Heart left ventricle (tissue), 16 donors: ENCODE measurements at regions of chr6 and their contacts with region 1.

Region 1: DNA sequence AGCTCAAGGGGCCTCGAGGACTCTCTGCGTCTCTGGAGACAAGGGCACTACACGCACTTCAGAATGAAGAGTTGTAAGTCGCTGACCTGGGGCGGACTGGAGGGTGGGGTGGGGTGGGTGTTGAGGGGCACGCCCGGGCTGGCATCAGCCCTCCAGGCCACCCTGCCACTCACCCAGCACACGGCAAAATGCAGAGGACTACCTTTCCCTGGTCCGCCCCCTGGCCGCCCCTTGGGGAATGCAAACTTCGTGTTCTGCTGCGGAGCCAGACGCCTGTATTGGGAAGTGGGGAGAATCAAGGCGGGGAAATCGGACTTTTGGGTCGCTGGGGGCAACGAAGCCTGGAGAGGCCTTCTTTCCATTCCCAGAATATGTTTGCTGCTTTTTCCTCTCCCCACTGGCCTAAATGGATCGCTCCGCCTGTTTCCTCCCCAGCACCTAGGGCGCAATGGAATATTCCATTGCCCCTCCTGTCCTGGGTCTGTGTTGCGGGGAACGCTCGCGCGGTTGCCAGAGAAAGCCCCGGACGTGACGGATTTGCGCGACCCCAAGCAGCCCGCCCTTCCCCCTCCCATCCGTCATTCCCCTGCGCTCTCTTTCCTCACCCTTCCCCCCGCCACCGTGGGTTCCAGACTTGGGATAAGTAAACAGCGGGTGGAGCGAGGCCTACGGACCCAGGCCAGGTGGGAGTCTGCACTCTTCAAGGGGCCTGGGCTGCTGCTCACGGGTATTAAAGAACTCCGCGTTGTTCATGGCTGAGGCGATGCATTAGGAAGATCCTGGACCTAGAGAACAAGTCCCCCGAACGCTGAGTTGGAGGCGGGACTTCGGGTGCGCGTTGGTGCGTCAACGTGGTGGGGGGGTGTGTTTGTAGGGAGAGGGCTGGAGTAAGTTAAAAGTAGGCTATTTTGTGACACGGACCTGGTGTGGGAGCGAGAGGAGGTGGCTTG is at the start of gene PPT2:
- DNase-seq: peak; percentile 92 to 96 (median 94)
- ATAC-seq: peak; percentile 89 to 94 (median 92)
- H3K4me3 ChIP-seq: peak within 1 kb of the TSS; percentile 47 to 91 (median 78)
- H3K27ac ChIP-seq: peak within 1 kb of the TSS; percentile 66 to 96 (median 91)
- H3K4me1 ChIP-seq: peaks cover 6 to 41% (median 21%) of the 10 kb centered on the region in 12 donors
- H3K27me3 ChIP-seq: peaks cover 0 to 37% (median 4%) of the 10 kb centered on the region in 9 donors
- CTCF ChIP-seq: peak in 5 of 12 donors; percentile 3 to 46 (median 18)
- POLR2A ChIP-seq: no peak
- total RNA-seq, gene PPT2: 17.1 to 34.0 (median 22.7) TPM

Region 2: GRCh38 chr6:31267651-31268368 is 886.0 kb before region 1 on chr6:
- intact Hi-C with region 1: no loop called
- DNase-seq: no peak
- ATAC-seq: no peak
- H3K4me3 ChIP-seq: no peak overlapping the region
- H3K27ac ChIP-seq: no peak overlapping the region
- H3K4me1 ChIP-seq: peaks cover 0 to 24% (median 2%) of the 10 kb centered on the region in 12 donors
- H3K27me3 ChIP-seq: no peaks in the 10 kb centered on the region
- CTCF ChIP-seq: no peak
- POLR2A ChIP-seq: no peak

Region 3: DNA sequence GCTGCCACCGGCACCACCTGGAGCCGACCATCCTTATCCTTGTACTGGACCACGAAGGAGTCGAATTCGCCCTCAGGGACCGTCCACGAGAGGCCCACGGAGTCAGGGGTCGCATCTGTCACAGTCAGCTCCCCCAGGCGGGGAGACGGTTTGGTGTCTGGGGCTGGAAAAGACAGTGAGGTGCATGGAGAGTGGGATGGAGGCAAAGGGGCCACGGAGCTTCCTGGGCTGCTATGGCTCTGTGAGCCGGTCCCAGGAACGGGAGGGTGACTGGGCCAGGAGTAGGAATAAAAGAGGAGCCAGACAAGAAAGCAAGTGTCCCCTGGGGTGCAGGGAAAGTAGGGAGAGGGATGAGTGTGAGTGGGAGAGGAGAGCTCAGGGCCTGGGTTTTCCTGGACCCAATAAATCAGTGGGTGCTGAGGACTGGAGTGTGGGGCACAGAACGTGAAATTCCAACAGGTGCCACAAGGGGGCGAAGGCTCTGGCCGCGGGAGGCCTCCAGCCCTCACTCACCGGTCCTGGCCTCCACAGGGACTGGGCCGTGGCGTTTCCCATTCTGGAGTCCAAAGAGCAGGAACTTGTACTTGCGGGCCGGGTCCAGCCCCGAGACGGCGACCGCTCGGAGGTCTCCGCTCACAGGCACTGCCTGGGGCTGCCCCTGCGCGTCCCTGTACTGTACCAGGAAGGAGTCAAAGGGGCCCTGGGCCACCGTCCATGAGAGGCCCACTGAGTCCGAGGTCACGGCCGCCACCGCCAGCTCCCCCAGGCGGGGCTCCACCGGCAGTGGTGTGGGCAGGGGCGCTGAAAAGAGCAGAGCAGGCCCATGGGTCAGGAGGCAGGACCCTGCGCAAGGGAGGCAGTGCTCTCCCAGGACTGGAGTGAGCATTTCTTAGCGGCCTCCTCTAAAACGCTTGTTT is 105.7 kb before region 1 on chr6:
- intact Hi-C with region 1: loop called in 1 of 10 experiments (anchors 10 kb)
- DNase-seq: peak; percentile 64 to 85 (median 75)
- ATAC-seq: peak; percentile 23 to 63 (median 55)
- H3K4me3 ChIP-seq: peak overlapping the region in 1 of 12 donors; percentile 5
- H3K27ac ChIP-seq: peak overlapping the region in 11 of 12 donors; percentile 3 to 88 (median 74)
- H3K4me1 ChIP-seq: peaks cover 0 to 34% (median 24%) of the 10 kb centered on the region in 12 donors
- H3K27me3 ChIP-seq: no peaks in the 10 kb centered on the region
- CTCF ChIP-seq: peak; percentile 76 to 93 (median 80)
- POLR2A ChIP-seq: no peak

Region 4: DNA sequence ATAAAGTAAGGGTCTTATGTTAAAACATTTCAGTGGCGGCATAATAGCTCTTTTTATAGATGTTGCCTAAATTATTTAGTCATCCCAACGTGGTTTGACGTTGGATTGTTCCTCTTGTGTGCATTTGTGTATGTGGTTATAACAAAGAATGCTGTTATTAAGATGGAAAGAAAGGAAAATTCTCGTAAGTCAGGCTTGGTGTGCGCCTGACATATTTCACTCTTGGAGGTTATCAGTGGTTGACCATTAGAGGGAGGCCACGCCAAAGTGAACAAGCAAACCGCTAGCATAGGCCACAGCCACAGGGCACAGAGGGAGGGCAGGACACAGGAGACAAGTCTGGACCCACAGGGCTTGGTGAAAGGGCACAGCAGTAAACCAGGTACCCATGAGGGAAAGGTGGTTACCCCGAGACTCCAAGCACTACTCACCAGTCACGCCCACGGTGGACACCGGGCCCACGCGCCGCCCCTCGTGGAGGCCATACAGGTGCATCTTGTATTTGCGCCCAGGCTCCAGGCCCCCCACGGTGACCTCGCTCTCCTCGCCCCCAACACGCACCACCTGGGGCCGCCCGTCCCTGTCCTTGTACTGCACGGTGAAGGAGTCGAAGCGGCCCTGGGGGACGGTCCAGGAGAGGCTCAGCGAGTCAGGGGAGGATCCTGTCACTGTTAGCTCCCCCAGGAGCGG is 92.7 kb before region 1 on chr6:
- intact Hi-C with region 1: no loop called
- DNase-seq: no peak
- ATAC-seq: no peak
- H3K4me3 ChIP-seq: no peak overlapping the region
- H3K27ac ChIP-seq: no peak overlapping the region
- H3K4me1 ChIP-seq: peaks cover 0 to 5% (median 0%) of the 10 kb centered on the region in 12 donors
- H3K27me3 ChIP-seq: no peaks in the 10 kb centered on the region
- CTCF ChIP-seq: no peak
- POLR2A ChIP-seq: no peak

Region 5: GRCh38 chr6:32118782-32119628 is 34.8 kb before region 1 on chr6:
- intact Hi-C with region 1: loop called in 6 of 10 experiments (anchors 1 to 5 kb)
- DNase-seq: peak; percentile 86 to 92 (median 87)
- ATAC-seq: peak; percentile 76 to 81 (median 80)
- H3K4me3 ChIP-seq: peak overlapping the region in 1 of 12 donors; percentile 16
- H3K27ac ChIP-seq: peak overlapping the region in 9 of 12 donors; percentile 7 to 66 (median 50)
- H3K4me1 ChIP-seq: peaks cover 0 to 27% (median 19%) of the 10 kb centered on the region in 12 donors
- H3K27me3 ChIP-seq: no peaks in the 10 kb centered on the region
- CTCF ChIP-seq: peak; percentile 90 to 99 (median 94)
- POLR2A ChIP-seq: no peak

Region 6: DNA sequence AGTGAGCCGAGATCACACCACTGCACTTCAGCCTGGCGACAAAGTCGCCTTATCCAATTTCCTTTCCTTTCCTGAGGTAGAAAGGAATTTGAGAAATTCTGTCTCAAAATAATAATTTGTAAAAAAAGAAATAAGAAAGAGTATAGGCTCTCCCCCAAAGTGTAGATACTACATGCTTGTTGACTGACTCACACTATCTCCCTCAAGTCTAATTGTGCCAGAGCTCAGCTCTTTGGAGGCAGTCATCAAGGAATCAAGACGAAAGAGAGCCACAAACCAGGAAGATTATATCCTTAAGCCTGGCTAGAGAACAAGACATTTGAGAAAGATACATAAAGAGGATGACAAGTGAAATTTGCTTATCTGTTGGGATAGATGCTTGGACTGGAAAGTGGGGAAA is 20.1 kb before region 1 on chr6:
- intact Hi-C with region 1: loop called in 3 of 10 experiments (anchors 1 to 2 kb)
- DNase-seq: no peak
- ATAC-seq: no peak
- H3K4me3 ChIP-seq: no peak overlapping the region
- H3K27ac ChIP-seq: no peak overlapping the region
- H3K4me1 ChIP-seq: peaks cover 6 to 16% (median 9%) of the 10 kb centered on the region in 12 donors
- H3K27me3 ChIP-seq: no peaks in the 10 kb centered on the region
- CTCF ChIP-seq: no peak
- POLR2A ChIP-seq: no peak

Region 7: DNA sequence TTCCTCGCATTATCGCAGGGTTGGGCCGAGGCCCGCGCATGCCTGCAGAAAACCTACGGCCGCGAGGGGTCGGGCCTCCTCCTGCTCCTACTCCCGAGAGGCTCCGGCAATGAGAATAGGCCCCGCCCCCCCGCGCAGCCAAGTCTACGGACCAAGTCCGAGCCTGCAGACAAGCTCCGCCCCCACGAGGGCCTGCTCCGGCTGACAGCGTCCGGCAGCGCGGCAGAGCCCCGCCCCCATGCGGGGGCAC is 41.7 kb after region 1 on chr6:
- intact Hi-C with region 1: loop called in 1 of 10 experiments (anchors 1 kb)
- DNase-seq: peak; percentile 100
- ATAC-seq: peak in 3 of 4 donors; percentile 85 to 93 (median 86)
- H3K4me3 ChIP-seq: peak overlapping the region in 10 of 12 donors; percentile 65 to 93 (median 76)
- H3K27ac ChIP-seq: peak overlapping the region; percentile 92 to 100 (median 100)
- H3K4me1 ChIP-seq: peaks cover 7 to 61% (median 39%) of the 10 kb centered on the region in 12 donors
- H3K27me3 ChIP-seq: no peaks in the 10 kb centered on the region
- CTCF ChIP-seq: peak; percentile 48 to 73 (median 56)
- POLR2A ChIP-seq: no peak